ENCODE measurements at regions of chr20 and their contacts with region 1.

Region 1: DNA sequence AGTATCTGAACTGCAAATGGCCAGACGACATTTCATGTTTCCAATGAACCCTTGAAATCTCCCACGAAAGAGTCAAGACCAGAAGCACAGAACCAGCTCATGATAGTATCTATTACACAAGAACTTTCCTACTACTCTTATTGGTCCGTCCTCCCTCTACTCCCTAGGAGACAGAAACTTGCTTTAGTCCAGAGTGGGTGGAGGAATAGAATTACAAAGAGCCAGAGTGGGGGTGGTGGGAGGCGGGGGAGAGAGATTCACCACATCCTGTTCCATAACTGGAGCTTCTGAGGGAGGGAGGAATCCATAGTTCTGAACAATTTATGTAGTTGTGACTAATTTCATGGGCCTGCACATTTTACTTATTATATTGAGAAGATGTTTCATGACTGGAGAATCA is 18.5 kb upstream of the WFDC10A start:
- DNase-seq: peak; percentile 82
- H3K4me3 Mint-ChIP-seq: no peak overlapping the region
- H3K27ac Mint-ChIP-seq: no peak overlapping the region
- H3K4me1 Mint-ChIP-seq: peaks cover 17% of the 10 kb centered on the region
- H3K27me3 Mint-ChIP-seq: peaks cover 28% of the 10 kb centered on the region

Region 2: DNA sequence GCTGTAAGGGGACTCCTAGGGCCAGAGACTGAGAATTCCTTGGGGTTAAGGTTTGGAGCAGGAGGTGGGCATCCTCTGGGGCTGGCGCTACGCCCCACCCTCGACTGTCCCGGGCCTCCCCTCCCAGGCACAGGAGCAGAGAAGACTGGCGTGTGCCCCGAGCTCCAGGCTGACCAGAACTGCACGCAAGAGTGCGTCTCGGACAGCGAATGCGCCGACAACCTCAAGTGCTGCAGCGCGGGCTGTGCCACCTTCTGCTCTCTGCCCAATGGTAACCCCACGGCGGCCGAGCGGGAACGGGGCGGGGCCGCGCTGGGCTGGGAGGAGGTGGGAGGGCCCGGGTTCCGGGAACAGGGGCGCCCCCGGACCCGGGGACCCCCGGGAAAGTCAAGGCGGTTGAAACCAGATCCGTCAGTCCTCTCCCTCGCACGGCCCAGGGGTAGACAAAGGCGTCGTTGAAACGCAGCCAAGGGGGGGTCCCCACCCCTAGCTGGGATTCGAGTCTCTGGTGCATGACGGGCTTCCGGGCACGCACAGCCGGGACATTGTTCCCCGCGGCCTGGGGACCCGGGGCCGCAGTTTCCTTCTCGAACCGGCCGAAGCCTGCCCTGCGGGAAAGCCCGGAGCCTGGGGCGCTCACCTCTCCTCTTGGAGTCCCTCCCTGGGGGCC is 140.7 kb before region 1 on chr20:
- CTCF ChIA-PET with region 1: no interaction called
- POLR2A ChIA-PET with region 1: no interaction called
- intact Hi-C with region 1: no loop called
- DNase-seq: peak; percentile 31
- H3K4me3 Mint-ChIP-seq: peak overlapping the region; percentile 38
- H3K27ac Mint-ChIP-seq: no peak overlapping the region
- H3K4me1 Mint-ChIP-seq: peaks cover 10% of the 10 kb centered on the region
- H3K27me3 Mint-ChIP-seq: peaks cover 56% of the 10 kb centered on the region

Region 3: GRCh38 chr20:45487231-45487635 is 123.8 kb before region 1 on chr20:
- CTCF ChIA-PET with region 1: no interaction called
- POLR2A ChIA-PET with region 1: no interaction called
- intact Hi-C with region 1: no loop called
- DNase-seq: no peak
- H3K4me3 Mint-ChIP-seq: no peak overlapping the region
- H3K27ac Mint-ChIP-seq: no peak overlapping the region
- H3K4me1 Mint-ChIP-seq: no peaks in the 10 kb centered on the region
- H3K27me3 Mint-ChIP-seq: peaks cover 20% of the 10 kb centered on the region

Region 4: DNA sequence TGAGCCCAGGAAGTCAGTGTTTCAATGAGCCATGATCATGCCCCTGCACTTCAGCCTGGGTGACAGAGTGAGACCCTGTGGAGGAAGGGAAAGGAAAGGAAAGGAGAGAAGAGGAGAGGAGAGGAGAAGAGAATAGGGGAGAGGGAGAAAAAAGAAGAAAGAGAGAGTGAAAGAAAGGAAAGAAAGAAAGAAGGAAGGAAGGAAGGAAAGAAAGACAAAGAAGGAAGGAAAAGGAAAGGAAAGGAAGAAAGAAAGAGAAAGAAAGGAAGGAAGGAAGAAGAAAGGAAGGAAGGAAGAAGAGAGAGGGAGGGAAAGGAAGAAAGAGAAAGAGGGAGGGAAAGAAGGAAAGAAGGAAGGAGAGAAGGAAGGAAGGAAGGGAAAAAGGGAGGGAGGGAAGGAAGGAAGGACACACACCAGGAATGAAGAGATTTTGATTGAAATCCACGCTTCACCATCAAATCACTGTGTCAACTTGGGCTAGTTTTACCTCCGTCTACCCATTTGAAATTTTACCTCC is 46.2 kb before region 1 on chr20:
- CTCF ChIA-PET with region 1: no interaction called
- POLR2A ChIA-PET with region 1: no interaction called
- intact Hi-C with region 1: no loop called
- DNase-seq: no peak
- H3K4me3 Mint-ChIP-seq: no peak overlapping the region
- H3K27ac Mint-ChIP-seq: no peak overlapping the region
- H3K4me1 Mint-ChIP-seq: no peaks in the 10 kb centered on the region
- H3K27me3 Mint-ChIP-seq: peaks cover 9% of the 10 kb centered on the region

Region 5: GRCh38 chr20:45752746-45753145 is 141.7 kb after region 1 on chr20:
- CTCF ChIA-PET with region 1: no interaction called
- POLR2A ChIA-PET with region 1: interaction called, 3 read pairs
- intact Hi-C with region 1: loop called (anchors 1 kb)
- DNase-seq: peak; percentile 39
- H3K4me3 Mint-ChIP-seq: no peak overlapping the region
- H3K27ac Mint-ChIP-seq: no peak overlapping the region
- H3K4me1 Mint-ChIP-seq: peaks cover 18% of the 10 kb centered on the region
- H3K27me3 Mint-ChIP-seq: peaks cover 26% of the 10 kb centered on the region

Measured in activated CD4-positive, alpha-beta memory T cell treated with anti-CD3 and anti-CD28 coated beads for 36 hours (primary cell).